Ascending aorta (tissue), 2 donors: ENCODE measurements at regions of chr16 and their contacts with region 1.

Region 1: GRCh38 chr16:2531767-2532493 is 722 bp upstream of the CEMP1 start:
- DNase-seq: peak; percentile 94 to 99
- H3K4me3 ChIP-seq: peak overlapping the region; percentile 70 to 80
- H3K27ac ChIP-seq: peak overlapping the region; percentile 97
- H3K4me1 ChIP-seq: peaks cover 0 to 15% of the 10 kb centered on the region in 2 donors
- H3K27me3 ChIP-seq: no peaks in the 10 kb centered on the region
- CTCF ChIP-seq: no peak

Region 2: GRCh38 chr16:1308977-1309885 is 1222.7 kb before region 1 on chr16 and contains the start of gene UBE2I:
- intact Hi-C with region 1: loop called (anchors 5 kb)
- DNase-seq: peak; percentile 86 to 98
- H3K4me3 ChIP-seq: peak within 1 kb of the TSS; percentile 83 to 91
- H3K27ac ChIP-seq: peak within 1 kb of the TSS; percentile 96 to 99
- H3K4me1 ChIP-seq: peaks cover 21 to 24% of the 10 kb centered on the region in 2 donors
- H3K27me3 ChIP-seq: no peaks in the 10 kb centered on the region
- CTCF ChIP-seq: no peak
- total RNA-seq, gene UBE2I: 141 TPM

Region 3: DNA sequence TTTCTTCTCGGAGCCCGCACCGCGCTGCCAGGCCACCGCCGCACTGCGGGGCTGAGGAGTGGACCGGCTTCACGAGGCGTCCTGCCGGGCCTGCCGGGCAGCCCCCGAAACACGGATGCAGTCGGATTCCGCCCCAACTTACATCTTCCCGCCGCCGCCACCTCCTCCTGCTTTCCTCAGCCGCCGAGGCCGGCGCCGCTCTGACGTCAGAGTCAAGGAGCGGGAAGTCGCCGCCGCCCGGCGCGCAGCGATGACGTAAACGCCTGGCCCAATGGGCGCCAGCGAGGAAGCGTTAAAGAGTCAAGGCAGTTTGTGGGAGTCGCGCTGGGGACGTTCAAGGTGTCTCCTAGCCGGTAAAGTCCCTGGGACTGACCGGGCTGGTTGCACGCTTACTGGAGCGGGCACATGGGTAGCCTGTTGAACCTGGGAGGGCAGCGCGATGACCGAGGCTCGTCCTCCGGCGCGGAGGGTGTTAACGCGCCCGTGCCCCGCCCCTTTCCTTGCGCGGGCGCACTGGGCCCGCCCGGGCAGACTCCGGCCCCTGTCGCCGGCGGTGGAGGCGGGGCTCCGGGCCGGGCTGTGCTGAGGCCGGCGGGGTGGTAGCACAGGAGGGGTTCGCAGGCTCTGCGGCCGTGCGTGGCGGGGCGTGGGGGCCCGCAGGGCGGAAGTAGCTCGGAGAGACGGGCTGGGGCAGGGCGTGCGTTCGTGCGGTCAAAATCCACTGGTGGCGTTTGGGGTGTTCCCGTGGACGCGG is 263.8 kb before region 1 on chr16 and contains the start of gene RNPS1:
- intact Hi-C with region 1: no loop called
- DNase-seq: peak; percentile 77 to 98
- H3K4me3 ChIP-seq: peak within 1 kb of the TSS; percentile 63 to 92
- H3K27ac ChIP-seq: peak within 1 kb of the TSS; percentile 95 to 98
- H3K4me1 ChIP-seq: peaks cover 10 to 21% of the 10 kb centered on the region in 2 donors
- H3K27me3 ChIP-seq: no peaks in the 10 kb centered on the region
- CTCF ChIP-seq: no peak
- total RNA-seq, gene RNPS1: 134 TPM

Region 4: DNA sequence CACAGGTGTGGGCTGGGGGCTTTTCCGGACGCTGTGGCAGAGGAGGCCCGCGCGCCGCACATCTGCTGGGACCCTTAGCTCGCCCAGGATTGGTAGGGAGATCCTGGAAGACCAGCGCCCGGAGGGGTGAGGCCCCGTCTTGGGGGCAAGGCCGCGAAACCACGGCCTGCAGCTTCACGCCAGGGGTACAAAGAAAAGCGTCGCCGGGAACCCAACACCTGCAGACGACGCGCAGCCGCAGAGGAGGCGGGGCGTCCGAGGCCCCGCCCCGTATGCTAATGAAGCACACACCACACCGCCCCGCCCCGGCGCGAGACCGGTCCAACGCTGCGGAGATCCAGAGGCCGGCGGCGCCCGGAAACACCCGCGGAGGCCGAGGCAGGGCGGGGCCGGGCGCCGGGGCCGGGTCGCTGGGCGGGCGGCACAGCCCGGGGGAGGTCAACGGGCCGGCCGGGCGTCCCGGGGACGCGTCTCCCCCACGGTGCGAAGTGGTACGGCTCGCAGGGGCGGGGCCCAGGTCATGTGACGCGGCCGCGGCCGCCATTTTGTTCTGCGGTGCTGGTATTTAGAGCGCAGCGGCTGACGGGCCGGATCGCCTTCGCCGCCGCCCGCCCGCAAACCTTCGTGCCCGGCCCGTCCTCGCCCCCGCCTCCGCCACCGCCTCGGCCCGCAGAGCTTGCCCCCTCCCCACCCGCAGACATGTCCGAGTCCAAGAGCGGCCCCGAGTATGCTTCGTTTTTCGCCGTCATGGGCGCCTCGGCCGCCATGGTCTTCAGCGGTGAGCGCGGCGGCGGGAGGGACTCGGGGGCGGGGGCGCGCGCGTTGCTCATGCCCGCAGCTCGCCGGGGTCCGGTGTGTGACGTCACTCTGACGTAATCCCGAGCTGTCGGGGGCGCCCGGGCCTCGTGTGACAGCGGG is 18.3 kb before region 1 on chr16 and contains the start of gene ATP6V0C:
- intact Hi-C with region 1: loop called (anchors 2 kb)
- DNase-seq: peak; percentile 74 to 95
- H3K4me3 ChIP-seq: peak within 1 kb of the TSS; percentile 81 to 98
- H3K27ac ChIP-seq: peak within 1 kb of the TSS; percentile 96 to 97
- H3K4me1 ChIP-seq: peaks cover 12 to 42% of the 10 kb centered on the region in 2 donors
- H3K27me3 ChIP-seq: no peaks in the 10 kb centered on the region
- CTCF ChIP-seq: no peak
- total RNA-seq, gene ATP6V0C: 91.9 TPM

Region 5: DNA sequence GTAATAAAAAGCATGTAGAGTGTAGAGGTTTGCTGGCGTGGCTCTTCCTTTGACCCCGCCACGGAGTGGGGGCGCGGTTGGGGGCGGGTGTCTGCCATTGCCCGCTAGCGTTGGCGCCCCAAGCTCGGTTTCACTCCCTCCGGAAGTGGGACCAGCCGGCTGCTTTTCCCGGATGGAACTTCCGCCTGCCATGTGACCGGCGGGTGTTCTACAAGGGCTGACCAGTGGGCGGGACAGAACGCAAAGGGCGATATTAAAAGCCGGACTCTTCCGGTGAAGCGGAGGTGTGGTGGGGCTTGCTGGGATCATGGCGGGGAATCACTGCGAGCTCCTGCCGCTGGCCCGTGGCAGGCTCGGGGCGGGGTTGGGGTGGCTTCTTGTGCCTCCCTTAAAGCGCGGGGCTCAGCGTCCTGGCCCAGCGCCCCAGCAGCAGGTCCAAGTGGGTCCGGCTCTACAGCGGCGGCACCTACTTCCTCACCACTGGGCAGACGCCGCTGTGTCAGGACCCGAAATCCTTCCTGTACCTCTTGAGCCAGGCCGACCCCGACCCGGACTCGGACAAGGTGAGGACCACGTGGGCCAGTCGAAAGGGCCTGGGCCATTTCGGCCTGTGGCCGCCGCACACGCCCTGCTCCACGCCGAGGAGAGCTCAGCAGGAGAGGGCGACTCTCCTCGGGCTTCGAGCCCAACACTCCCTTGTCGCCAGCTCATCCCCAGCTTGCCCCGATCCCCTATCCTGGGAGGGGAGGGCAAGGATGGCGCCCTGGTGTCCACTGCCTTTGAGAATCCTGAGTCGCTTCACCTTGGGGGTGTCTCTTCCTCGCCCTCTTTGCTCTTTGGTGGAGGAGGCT is 71.5 kb after region 1 on chr16:
- intact Hi-C with region 1: loop called (anchors 1 kb)
- DNase-seq: peak; percentile 83 to 97
- H3K4me3 ChIP-seq: peak overlapping the region; percentile 73 to 88
- H3K27ac ChIP-seq: peak overlapping the region; percentile 63 to 77
- H3K4me1 ChIP-seq: no peaks in the 10 kb centered on the region
- H3K27me3 ChIP-seq: no peaks in the 10 kb centered on the region
- CTCF ChIP-seq: no peak

Region 6: GRCh38 chr16:2673066-2673999 is 141.4 kb after region 1 on chr16:
- intact Hi-C with region 1: loop called (anchors 5 kb)
- DNase-seq: peak; percentile 85 to 97
- H3K4me3 ChIP-seq: peak overlapping the region; percentile 67 to 83
- H3K27ac ChIP-seq: peak overlapping the region; percentile 66 to 75
- H3K4me1 ChIP-seq: peaks cover 0 to 14% of the 10 kb centered on the region in 2 donors
- H3K27me3 ChIP-seq: no peaks in the 10 kb centered on the region
- CTCF ChIP-seq: no peak

Region 7: DNA sequence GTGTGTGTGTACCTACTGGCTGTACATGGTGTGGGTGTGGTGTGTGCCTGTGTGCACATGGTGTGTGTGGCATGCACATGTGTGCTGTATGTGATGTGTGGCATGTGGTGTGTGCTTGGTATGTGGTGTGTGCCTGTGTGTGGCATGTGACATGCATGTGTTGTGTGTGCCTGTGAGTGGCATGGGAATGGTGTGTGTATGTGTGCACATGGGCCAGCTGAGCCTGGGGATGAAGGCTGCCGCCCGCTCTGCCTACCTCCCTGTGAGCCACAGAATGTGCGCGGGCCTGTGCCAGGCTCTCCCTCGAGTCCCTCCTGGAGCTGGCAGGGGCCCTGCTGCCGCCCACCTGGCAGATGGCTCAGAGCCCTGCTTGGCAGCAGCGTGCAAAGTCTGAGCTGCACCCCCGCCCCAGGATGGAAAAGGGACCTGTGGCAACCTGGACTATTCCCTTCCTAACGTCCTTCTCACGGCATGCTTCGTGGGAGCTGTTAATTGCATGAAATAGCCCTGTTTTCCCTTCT is 178.8 kb after region 1 on chr16:
- intact Hi-C with region 1: no loop called
- DNase-seq: no peak
- H3K4me3 ChIP-seq: no peak overlapping the region
- H3K27ac ChIP-seq: no peak overlapping the region
- H3K4me1 ChIP-seq: no peaks in the 10 kb centered on the region
- H3K27me3 ChIP-seq: no peaks in the 10 kb centered on the region
- CTCF ChIP-seq: no peak

Region 8: DNA sequence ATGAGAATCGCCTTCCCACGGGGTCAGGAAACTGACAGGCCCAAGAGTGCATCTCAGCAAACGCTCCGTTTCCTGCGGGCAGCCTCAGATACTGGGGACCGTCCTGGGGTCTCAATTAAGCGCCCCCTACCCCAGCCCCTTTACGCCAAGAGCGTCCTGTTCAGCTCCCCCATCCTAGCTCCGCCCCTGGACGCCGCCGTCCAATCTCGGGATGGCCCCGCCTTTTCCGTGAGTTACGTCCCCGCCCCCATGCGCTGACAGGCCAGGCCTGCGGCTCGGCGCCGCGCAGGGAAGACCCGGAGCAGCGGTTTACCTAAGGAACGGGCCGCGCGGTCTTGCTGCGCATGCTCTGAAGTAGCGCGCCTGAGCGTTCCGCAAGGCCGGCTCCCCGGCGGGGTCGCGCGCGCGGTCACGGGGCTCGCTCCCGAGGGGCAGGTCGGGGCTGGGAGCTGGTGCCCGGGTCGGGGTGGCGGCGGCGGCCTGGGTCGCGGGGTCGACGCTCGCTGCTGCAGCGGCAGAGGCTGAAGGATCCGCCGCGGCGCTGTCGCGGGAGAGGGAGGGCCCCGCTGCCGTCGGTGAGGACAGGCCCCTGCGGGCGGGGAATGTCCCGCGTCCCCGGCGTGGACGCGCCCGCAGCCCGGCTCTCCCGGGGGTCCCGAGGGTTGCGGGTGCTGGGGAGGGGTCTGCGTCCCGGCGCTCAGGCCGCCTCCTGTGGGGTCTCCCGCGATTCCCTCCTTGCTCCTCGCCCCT is 379.8 kb after region 1 on chr16 and contains the start of gene FLYWCH1:
- intact Hi-C with region 1: loop called (anchors 10 kb)
- DNase-seq: peak; percentile 92 to 99
- H3K4me3 ChIP-seq: peak within 1 kb of the TSS; percentile 73 to 87
- H3K27ac ChIP-seq: peak within 1 kb of the TSS; percentile 83 to 88
- H3K4me1 ChIP-seq: peaks cover 0 to 15% of the 10 kb centered on the region in 2 donors
- H3K27me3 ChIP-seq: no peaks in the 10 kb centered on the region
- CTCF ChIP-seq: no peak
- total RNA-seq, gene FLYWCH1: 74.3 TPM

Region 9: GRCh38 chr16:3150346-3151218 is 618.7 kb after region 1 on chr16:
- intact Hi-C with region 1: loop called (anchors 10 kb)
- DNase-seq: peak; percentile 89 to 98
- H3K4me3 ChIP-seq: peak overlapping the region; percentile 76
- H3K27ac ChIP-seq: peak overlapping the region; percentile 82 to 86
- H3K4me1 ChIP-seq: peaks cover 0 to 15% of the 10 kb centered on the region in 2 donors
- H3K27me3 ChIP-seq: no peaks in the 10 kb centered on the region
- CTCF ChIP-seq: no peak